ENCODE measurements at regions of chr1 and their contacts with region 1.

Region 1: GRCh38 chr1:15526490-15527339 is at the start of gene DNAJC16:
- DNase-seq: peak; percentile 99
- H3K4me3 Mint-ChIP-seq: peak within 1 kb of the TSS; percentile 95
- H3K27ac Mint-ChIP-seq: peak within 1 kb of the TSS; percentile 99
- H3K4me1 Mint-ChIP-seq: peaks cover 51% of the 10 kb centered on the region
- H3K27me3 Mint-ChIP-seq: no peaks in the 10 kb centered on the region
- total RNA-seq, gene DNAJC16: 7.1 to 9.8 TPM

Region 2: GRCh38 chr1:15417365-15417934 is 109.3 kb before region 1 on chr1:
- CTCF ChIA-PET with region 1: no interaction called
- intact Hi-C with region 1: loop called (anchors 2 kb)
- DNase-seq: peak; percentile 61
- H3K4me3 Mint-ChIP-seq: no peak overlapping the region
- H3K27ac Mint-ChIP-seq: peak overlapping the region; percentile 71
- H3K4me1 Mint-ChIP-seq: peaks cover 47% of the 10 kb centered on the region
- H3K27me3 Mint-ChIP-seq: no peaks in the 10 kb centered on the region

Region 3: DNA sequence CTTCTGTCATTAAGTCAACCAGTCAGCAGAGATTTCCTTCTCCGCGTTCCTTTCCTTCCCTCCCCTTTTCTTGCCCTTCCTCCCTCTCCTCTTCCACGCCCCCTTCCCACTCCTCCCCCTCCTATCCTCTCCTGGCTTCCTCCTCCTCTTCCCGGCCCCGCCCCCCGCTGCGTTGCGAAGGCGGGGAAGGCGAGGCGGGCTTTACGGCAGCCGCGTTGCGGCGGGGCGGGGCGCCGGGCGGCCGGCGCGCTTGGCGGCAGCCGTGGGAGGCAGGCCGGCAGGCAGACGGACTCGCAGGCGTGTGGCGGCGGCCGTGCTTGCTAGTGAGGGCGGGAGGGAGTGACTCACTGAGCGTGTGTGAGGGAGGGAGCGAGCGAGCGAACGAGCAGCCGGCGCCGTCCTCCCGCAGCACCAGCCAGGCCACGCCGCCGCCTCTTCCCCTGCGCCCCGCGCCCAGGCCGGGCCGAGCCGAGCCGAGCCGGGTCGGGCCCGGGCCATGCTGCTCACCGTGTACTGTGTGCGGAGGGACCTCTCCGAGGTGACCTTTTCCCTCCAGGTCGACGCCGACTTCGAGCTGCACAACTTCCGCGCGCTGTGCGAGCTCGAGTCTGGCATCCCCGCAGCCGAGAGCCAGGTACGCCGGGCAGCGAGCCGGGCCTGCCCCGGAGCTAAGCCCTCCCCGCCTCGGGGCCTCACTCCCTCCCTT is 90.6 kb after region 1 on chr1 and contains the start of gene DDI2:
- CTCF ChIA-PET with region 1: interaction called, 3 read pairs
- intact Hi-C with region 1: loop called (anchors 1 kb)
- DNase-seq: peak; percentile 96
- H3K4me3 Mint-ChIP-seq: peak within 1 kb of the TSS; percentile 90
- H3K27ac Mint-ChIP-seq: peak within 1 kb of the TSS; percentile 93
- H3K4me1 Mint-ChIP-seq: peaks cover 42% of the 10 kb centered on the region
- H3K27me3 Mint-ChIP-seq: no peaks in the 10 kb centered on the region
- total RNA-seq, gene DDI2: 19.6 to 20.7 TPM

Region 4: GRCh38 chr1:15760520-15761211 is 234.0 kb after region 1 on chr1:
- CTCF ChIA-PET with region 1: no interaction called
- intact Hi-C with region 1: no loop called
- DNase-seq: no peak
- H3K4me3 Mint-ChIP-seq: no peak overlapping the region
- H3K27ac Mint-ChIP-seq: no peak overlapping the region
- H3K4me1 Mint-ChIP-seq: peaks cover 16% of the 10 kb centered on the region
- H3K27me3 Mint-ChIP-seq: peaks cover 31% of the 10 kb centered on the region

Region 5: DNA sequence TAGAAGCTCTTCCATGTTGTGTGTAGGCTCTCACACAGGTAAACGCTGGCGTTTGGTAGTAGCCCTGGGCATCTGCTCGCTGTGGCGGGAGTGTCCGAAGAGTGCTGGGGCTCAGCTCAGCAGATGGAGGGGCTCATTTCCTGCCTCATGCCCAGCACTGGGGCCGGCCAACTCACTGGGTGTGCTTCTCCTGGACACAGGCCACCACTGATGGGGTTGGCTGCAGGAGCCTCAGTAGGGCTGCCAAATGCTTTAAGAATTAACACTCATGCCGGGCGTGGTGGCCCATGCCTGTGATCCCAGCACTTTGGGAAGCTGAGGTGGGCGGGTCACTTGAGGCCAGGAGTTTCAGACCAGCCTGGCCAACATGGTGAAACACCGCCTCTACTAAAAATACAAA is 259.9 kb after region 1 on chr1:
- CTCF ChIA-PET with region 1: no interaction called
- intact Hi-C with region 1: no loop called
- DNase-seq: no peak
- H3K4me3 Mint-ChIP-seq: no peak overlapping the region
- H3K27ac Mint-ChIP-seq: no peak overlapping the region
- H3K4me1 Mint-ChIP-seq: no peaks in the 10 kb centered on the region
- H3K27me3 Mint-ChIP-seq: no peaks in the 10 kb centered on the region

Region 6: DNA sequence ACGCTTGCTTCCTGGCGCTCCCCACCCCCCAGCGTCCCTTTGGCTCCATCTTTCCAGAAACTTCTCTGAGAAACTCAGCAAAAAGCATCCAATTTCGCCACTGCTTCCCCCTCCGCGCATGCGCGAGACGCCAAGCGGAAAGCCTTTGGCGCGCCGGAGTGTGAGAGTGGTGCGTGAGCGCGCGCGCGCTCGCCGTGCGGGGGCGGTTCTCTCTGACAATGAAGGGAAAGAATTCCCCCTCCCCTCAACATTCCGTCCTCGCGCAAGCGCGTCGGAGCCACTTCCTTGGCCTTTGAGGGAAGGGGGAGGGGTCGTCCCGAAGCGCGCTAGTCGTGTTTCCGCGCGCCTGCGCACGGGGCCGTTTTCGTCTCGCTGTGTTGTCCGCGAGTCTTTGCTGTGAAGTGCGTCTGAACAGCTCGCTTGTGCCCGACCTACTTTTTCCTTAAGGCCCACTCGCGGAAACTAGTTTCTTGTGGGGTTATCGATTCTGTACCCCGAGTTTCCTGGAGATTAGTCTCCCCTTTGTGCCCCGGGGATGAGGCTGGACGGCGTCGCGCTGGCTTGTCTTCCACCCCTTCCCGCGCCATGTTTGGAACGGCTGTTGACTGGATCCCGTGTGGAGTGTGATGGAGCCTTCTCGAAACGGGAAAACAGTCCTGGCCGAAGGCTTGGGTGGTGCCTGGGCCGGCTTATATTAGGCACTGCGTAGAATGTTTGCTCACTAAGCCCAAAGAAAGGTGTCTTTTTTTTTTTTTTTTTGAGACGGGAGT is 309.2 kb after region 1 on chr1:
- CTCF ChIA-PET with region 1: no interaction called
- intact Hi-C with region 1: loop called (anchors 1 kb)
- DNase-seq: peak; percentile 100
- H3K4me3 Mint-ChIP-seq: peak overlapping the region; percentile 86
- H3K27ac Mint-ChIP-seq: peak overlapping the region; percentile 95
- H3K4me1 Mint-ChIP-seq: peaks cover 27% of the 10 kb centered on the region
- H3K27me3 Mint-ChIP-seq: no peaks in the 10 kb centered on the region

Region 7: DNA sequence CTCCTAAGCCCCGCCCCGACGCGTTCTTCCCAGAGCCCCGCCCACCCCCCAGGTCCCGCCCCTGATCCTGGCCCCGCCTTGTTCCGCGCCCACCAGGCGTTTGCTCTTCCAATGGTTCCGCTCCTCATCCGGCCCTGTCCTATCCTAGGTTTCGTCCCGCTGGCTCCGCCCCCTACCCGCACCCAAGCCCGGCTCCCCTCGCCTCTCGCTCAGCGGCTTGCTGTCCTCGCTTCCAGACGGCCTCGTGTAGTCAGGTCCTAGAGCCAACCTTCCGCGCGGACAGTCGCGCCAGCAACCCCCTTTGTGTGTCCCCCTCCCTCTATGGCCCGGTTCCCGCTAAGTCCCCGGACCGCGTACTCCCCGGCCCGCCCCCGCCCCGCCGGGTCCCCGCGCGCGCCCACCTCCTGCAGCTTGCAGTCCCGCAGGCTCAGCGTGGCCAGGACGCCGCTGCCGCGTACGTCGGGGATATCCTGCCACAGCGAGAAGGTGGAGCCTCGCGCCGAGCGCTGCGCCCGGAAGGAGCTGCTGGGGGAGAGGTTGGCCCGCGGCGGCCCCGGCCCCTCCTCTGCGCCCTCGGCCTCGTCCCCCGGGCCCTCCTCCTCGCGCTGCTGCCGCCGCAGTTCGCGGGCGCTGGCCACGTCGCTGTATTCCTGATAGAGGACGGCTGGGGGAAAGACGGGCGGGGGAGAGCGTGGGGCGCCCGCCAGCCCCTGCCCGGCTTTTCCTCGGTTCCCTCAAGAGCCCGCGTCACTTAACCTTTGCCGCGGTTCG is 680.0 kb after region 1 on chr1:
- CTCF ChIA-PET with region 1: no interaction called
- intact Hi-C with region 1: loop called (anchors 2 kb)
- DNase-seq: peak; percentile 95
- H3K4me3 Mint-ChIP-seq: peak overlapping the region; percentile 83
- H3K27ac Mint-ChIP-seq: peak overlapping the region; percentile 87
- H3K4me1 Mint-ChIP-seq: peaks cover 4% of the 10 kb centered on the region
- H3K27me3 Mint-ChIP-seq: no peaks in the 10 kb centered on the region

Measured in activated naive CD4-positive, alpha-beta T cell treated with anti-CD3 and anti-CD28 coated beads for 36 hours (primary cell).